Spleen (tissue), 13 donors: ENCODE measurements at regions of chr5 and their contacts with region 1.

Region 1: DNA sequence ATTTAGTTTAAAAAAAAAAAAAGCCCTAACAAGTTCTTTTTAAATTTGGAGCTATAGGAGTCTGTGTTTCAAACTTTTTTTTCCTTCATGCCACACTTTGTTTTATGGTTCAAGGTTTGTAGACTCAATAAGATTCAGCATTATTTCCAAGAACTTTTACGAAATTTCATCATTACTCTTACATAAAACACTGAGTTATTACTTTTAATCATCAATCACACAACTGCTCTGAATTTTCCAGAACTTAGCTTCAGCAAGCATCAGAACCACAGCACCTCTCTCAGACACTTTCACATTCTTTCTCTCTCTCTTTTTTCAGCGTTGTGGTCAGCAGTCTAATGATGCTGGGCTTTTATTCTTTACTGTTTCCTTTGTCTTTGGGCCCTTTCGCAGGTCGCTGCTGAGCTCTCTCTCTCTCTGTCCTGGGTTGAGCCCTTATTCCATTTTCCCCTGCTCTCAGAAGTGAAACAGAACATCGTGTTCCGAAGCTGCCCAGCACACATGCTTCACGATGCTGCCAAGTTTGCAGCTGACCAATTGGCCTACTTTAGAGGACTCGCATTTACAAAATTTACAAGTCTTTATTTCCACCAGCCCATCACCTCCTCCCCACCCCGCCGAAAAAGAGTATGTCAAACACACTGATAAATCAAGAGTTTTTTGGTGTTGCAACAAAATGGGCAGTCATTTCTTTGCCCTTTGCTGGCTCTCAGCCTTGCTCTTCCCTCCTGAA is 44.6 kb upstream of the PIK3R1 start:
- DNase-seq: no peak
- H3K4me3 ChIP-seq: no peak overlapping the region
- H3K27ac ChIP-seq: peak overlapping the region in 3 of 8 donors; percentile 37 to 55 (median 50)
- H3K4me1 ChIP-seq: peaks cover 0 to 10% (median 0%) of the 10 kb centered on the region in 6 donors
- H3K27me3 ChIP-seq: no peaks in the 10 kb centered on the region
- CTCF ChIP-seq: no peak
- POLR2A ChIP-seq: no peak

Region 2: GRCh38 chr5:67989456-67989855 is 181.5 kb before region 1 on chr5:
- intact Hi-C with region 1: no loop called
- DNase-seq: no peak
- H3K4me3 ChIP-seq: no peak overlapping the region
- H3K27ac ChIP-seq: no peak overlapping the region
- H3K4me1 ChIP-seq: no peaks in the 10 kb centered on the region
- H3K27me3 ChIP-seq: no peaks in the 10 kb centered on the region
- CTCF ChIP-seq: no peak
- POLR2A ChIP-seq: no peak

Region 3: GRCh38 chr5:68033961-68034571 is 136.9 kb before region 1 on chr5:
- intact Hi-C with region 1: no loop called
- DNase-seq: no peak
- H3K4me3 ChIP-seq: no peak overlapping the region
- H3K27ac ChIP-seq: peak overlapping the region in 1 of 8 donors; percentile 28
- H3K4me1 ChIP-seq: peaks cover 0 to 10% (median 1%) of the 10 kb centered on the region in 6 donors
- H3K27me3 ChIP-seq: no peaks in the 10 kb centered on the region
- CTCF ChIP-seq: no peak
- POLR2A ChIP-seq: no peak

Region 4: DNA sequence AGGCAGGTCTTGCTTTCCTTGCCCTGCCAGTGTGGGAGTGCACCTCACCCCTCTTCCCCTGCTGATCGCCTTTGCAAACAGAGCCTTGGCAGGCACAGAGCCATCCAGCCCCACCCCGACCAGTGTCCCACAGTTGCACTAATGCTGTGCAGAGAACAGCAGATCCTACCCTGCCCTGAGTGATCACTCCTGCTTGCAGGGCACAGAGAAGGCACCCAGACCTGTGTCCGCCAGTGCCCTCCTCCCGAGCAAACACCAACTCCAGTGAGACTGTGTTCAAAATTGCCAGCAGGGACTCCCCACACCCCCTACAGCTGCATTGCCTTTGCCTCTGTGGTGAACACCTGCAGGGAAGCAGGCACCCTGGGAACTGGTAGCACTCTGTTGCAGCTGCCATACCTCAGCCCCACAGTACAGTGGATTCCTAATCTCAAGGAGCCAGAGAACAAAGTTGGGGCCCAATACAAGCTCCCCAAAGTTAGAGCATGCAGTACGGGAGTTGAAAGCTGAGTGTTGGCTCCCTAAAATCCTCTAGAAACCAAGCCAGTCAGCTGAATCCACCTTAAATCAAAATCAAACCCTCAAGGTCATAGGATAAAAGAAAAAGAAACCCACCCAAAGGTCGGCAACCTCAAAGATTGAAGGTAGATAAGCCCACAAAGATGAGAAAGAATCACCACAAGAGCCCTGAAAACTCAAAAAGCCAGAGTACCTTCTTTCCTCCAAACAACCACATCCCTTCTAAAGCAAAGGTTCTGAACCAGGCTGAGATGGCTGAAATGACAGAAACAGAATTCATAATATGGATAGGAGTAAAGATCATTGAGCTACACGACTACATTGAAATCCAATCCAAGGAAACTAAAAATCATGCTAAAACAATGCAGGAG is 48.3 kb before region 1 on chr5:
- intact Hi-C with region 1: loop called (anchors 10 kb)
- DNase-seq: no peak
- H3K4me3 ChIP-seq: no peak overlapping the region
- H3K27ac ChIP-seq: no peak overlapping the region
- H3K4me1 ChIP-seq: no peaks in the 10 kb centered on the region
- H3K27me3 ChIP-seq: no peaks in the 10 kb centered on the region
- CTCF ChIP-seq: no peak
- POLR2A ChIP-seq: no peak

Region 5: GRCh38 chr5:68240202-68240601 is 69.2 kb after region 1 on chr5:
- intact Hi-C with region 1: no loop called
- DNase-seq: no peak
- H3K4me3 ChIP-seq: peak overlapping the region in 1 of 8 donors; percentile 29
- H3K27ac ChIP-seq: peak overlapping the region; percentile 44 to 82 (median 72)
- H3K4me1 ChIP-seq: peaks cover 34 to 100% (median 79%) of the 10 kb centered on the region in 6 donors
- H3K27me3 ChIP-seq: no peaks in the 10 kb centered on the region
- CTCF ChIP-seq: no peak
- POLR2A ChIP-seq: no peak